Activated naive CD8-positive, alpha-beta T cell treated with anti-CD3 and anti-CD28 coated beads, Interleukin-2, amount 10 ng/mL, durations not matched to agents 7 days and 5 days (primary cell): ENCODE measurements at regions of chr6 and their contacts with region 1.

Region 1: GRCh38 chr6:170584181-170584953 is at the start of gene PDCD2:
- DNase-seq: peak; percentile 91
- ATAC-seq: peak; percentile 96
- H3K4me3 Mint-ChIP-seq: peak within 1 kb of the TSS; percentile 99
- H3K27ac Mint-ChIP-seq: peak within 1 kb of the TSS; percentile 95
- H3K4me1 Mint-ChIP-seq: peaks cover 27% of the 10 kb centered on the region
- H3K27me3 Mint-ChIP-seq: no peaks in the 10 kb centered on the region
- total RNA-seq, gene PDCD2: 68.1 to 74.9 TPM

Region 2: DNA sequence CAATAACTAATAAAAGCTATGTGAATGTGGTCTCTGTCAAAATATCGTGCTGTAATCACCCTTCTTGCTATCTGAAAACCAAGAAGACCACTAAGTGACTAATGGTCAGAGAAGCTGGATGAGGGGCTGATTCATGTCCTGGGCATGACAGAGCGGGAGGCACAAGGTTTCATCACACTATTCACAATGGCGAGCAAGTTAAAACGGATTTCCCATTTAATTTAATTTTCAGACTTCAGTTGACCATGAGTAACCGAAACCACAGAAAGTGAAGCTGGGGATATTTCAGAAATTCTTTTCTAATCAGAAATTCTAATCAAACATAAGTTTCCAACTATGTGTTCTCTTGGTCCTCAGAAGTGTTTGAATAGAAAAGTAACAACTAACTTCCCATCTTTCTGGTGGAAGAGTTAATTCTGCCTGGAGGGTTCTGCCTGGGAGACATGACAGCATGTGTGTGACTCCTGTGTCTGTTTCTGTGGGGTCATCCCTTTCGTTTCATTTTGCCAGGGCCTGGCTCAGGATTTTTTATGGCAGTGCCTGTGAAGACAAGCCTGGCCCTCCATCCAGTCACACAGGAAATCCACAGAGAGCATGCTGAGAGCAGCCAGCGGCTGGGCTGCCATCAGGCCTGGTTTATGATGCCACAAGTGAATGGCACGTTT is 178.9 kb before region 1 on chr6:
- POLR2A ChIA-PET with region 1: no interaction called
- DNase-seq: no peak
- ATAC-seq: no peak
- H3K4me3 Mint-ChIP-seq: no peak overlapping the region
- H3K27ac Mint-ChIP-seq: no peak overlapping the region
- H3K4me1 Mint-ChIP-seq: peaks cover 3% of the 10 kb centered on the region
- H3K27me3 Mint-ChIP-seq: peaks cover 5% of the 10 kb centered on the region

Region 3: DNA sequence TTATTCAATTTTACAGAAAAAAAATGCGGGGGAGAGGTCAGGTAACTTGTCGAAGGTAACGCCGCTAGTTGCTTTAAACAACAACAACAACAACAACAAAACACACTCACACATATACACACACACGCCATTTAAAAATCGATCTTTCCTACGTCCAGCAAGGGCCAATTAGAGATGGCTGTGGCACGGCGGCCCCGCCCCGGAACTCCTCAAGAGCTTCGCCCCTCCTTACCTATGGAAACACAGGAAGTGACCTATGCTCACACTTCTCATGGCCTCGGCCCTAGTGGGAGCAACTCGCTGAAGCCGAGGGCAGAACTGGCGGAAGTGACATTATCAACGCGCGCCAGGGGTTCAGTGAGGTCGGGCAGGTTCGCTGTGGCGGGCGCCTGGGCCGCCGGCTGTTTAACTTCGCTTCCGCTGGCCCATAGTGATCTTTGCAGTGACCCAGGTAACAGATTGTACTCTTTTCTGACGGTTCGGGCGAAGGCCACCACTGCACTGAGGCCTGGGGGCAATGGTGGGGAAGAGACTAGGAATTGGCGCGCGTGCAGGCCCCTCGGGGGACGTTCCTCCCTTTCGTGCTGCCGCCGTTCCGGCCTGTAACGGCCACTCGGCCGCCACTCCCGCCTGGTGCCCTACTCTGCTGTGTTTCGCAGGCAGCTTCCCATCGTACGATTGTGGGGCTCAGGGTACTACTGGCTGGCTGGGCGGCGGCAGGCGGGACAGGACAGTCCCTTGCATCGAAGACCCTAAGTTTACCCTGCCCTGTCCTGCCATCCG is 30.2 kb before region 1 on chr6 and contains the start of gene TBP:
- POLR2A ChIA-PET with region 1: interaction called, 35 read pairs
- DNase-seq: peak; percentile 93
- ATAC-seq: peak; percentile 95
- H3K4me3 Mint-ChIP-seq: no peak within 1 kb of the TSS
- H3K27ac Mint-ChIP-seq: no peak within 1 kb of the TSS
- H3K4me1 Mint-ChIP-seq: peaks cover 32% of the 10 kb centered on the region
- H3K27me3 Mint-ChIP-seq: no peaks in the 10 kb centered on the region
- total RNA-seq, gene TBP: 28.2 to 29.6 TPM

Region 4: DNA sequence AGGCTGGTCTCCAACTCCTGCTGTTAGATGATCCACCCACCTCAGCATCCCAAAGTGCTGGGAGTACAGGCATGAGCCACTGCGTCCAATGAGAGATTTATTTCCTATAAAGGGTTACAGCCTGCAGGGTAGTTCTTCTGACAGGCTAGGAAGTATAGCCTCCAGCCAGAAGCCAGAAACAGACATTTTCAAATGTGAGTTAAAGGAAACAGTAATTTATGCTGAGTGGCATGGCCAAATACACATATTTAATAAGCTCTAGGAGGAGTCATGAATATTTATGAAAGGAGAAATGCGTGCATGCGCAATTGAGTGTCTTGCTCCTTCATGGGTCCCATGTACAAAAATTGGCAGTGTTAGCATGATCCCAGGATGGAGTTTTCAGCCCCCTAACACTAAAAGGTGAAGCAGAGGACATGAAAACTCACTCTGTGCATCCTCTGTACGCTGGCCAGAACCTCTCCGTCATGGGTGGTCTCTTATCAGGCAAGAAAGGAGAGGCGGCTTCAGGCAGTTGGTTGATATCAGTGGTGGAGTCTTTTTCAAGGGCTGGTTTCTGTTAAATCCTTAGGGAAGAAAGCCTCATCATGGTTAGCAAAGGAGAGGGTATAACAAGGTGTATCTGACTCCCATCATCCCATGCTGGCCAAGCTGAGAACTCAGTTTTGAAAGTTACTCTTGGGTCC is 21.4 kb after region 1 on chr6:
- POLR2A ChIA-PET with region 1: no interaction called
- DNase-seq: no peak
- ATAC-seq: no peak
- H3K4me3 Mint-ChIP-seq: no peak overlapping the region
- H3K27ac Mint-ChIP-seq: no peak overlapping the region
- H3K4me1 Mint-ChIP-seq: no peaks in the 10 kb centered on the region
- H3K27me3 Mint-ChIP-seq: peaks cover 75% of the 10 kb centered on the region